Right cardiac atrium (tissue), 5 donors: ENCODE measurements at regions of chr4 and their contacts with region 1.

Region 1: DNA sequence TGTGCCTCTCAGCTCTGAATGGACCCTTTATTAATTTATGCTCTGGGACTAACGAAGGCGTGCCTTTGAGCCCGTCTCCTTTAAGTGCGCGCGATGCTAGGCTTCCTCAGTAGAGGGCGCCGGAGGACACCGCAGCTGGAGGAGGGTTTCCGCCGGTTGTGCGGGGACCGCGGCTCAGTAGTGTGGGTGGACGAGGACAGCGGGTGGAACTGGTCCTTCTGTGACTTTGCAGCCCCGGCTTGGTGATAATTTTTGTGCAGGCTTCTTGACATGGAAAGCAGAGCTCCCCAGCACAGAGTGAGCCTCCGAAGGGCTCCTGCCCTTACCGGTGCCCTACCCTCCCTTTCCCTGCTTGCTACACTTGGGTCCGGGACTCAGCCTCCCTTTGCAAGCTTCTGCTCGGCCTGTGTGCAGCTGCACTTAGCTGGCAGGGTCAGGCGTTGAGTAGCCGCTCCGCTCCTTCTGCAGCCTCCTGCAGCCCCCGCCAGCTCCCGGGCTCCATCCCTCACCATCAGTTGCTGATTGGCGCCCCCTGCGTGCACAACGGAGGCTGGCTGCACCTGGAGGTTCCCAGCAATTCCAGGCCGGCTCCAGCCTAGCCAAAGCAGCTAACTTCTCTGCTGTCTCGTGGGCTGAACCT is 26.8 kb upstream of the BOD1L1 start:
- DNase-seq: peak; percentile 77 to 93 (median 92)
- ATAC-seq: peak; percentile 94 to 96
- H3K4me3 ChIP-seq: peak overlapping the region; percentile 30
- H3K27ac ChIP-seq: no peak overlapping the region
- H3K4me1 ChIP-seq: peaks cover 3% of the 10 kb centered on the region
- H3K27me3 ChIP-seq: no peaks in the 10 kb centered on the region

Region 2: GRCh38 chr4:13830449-13830848 is 176.2 kb after region 1 on chr4:
- intact Hi-C with region 1: loop called in 1 of 4 experiments (anchors 10 kb)
- DNase-seq: peak in 1 of 3 donors; percentile 48
- ATAC-seq: no peak
- H3K4me3 ChIP-seq: no peak overlapping the region
- H3K27ac ChIP-seq: no peak overlapping the region
- H3K4me1 ChIP-seq: peaks cover 11% of the 10 kb centered on the region
- H3K27me3 ChIP-seq: no peaks in the 10 kb centered on the region

Region 3: DNA sequence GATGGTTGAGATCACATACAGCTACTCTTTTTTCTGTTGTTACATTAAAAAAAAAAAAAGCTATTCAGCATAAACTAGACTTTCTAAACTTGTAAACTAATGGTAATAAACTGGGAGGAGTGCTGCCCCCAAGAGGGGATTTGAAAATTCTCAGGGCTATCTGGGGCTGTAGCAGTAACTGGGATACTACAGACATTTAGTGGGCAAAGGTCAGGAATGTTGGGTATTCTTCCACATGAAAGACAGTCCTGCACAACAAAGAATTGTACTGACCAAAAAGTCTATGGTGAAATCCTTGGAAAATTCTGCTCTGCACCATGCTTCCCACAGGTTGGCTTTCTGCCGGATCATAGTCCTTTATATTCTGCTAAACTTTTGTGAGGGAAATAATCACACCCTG is 205.8 kb after region 1 on chr4:
- intact Hi-C with region 1: loop called in 2 of 4 experiments (anchors 10 kb)
- DNase-seq: no peak
- ATAC-seq: no peak
- H3K4me3 ChIP-seq: no peak overlapping the region
- H3K27ac ChIP-seq: no peak overlapping the region
- H3K4me1 ChIP-seq: no peaks in the 10 kb centered on the region
- H3K27me3 ChIP-seq: no peaks in the 10 kb centered on the region